Activated CD4-positive, alpha-beta memory T cell treated with anti-CD3 and anti-CD28 coated beads for 36 hours (primary cell): ENCODE measurements at regions of chr3 and their contacts with region 1.

Region 1: DNA sequence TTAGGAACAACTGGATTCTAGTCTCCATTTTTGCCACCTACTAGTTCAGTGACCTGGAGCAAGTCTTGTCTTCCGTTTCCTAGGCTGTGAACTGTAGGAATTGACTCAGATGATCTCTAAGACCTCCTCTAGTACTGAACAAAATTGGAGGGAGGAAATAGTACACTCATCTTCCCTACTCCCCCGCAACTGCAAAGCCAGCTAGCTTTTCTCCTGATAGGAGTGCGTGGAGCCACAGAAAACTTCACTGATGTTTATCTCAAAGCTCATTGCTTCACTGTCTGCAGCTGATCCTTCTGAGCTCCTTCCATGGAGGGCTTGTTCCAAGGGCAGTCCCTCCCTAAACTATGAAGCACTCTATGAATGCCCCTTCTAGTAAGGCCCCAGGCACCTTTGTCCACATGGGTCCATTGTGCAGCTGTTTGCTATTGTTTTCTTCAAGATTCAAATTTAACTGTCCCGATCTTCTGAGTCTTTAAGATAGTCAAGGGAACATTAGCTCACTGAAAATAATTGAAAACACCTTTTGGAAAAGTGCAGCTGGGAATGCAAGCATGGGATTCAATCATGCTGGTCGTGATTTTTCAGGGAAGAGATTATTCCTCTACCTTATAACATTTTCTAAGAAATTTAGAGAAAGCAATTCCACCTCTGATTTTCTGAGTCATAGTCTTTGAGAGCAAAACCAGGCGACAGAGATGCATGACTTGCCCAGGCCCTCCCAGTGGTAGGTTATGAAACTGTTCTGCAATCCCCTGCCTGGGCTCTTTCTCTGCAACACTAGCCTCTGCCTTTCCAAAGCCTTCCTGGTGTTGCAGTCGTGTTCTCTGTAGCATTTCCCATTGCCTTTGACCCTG is 24.3 kb downstream of the FILIP1L start:
- DNase-seq: peak; percentile 45
- H3K4me3 Mint-ChIP-seq: no peak overlapping the region
- H3K27ac Mint-ChIP-seq: no peak overlapping the region
- H3K4me1 Mint-ChIP-seq: peaks cover 20% of the 10 kb centered on the region
- H3K27me3 Mint-ChIP-seq: no peaks in the 10 kb centered on the region

Region 2: DNA sequence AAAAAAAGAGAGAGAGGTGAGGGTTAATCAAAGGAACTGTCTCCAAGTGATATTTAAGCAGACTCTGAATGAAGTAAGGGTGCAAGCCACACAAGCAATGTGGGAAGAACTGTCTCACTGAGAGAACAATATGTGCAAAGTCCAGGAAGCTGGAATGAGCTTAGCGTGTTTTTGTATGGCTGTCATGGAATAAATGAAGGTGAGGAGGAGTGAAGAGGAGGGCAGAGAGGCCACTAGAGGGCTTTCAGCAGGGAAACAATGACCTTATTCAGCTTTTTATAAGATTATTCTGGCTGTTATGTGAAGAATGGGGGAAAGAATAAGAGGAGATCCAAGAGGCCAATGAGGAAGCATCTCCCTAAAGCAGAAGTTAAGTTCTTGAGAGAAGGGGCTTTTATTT is 538.5 kb before region 1 on chr3:
- CTCF ChIA-PET with region 1: no interaction called
- POLR2A ChIA-PET with region 1: no interaction called
- intact Hi-C with region 1: no loop called
- DNase-seq: no peak
- H3K4me3 Mint-ChIP-seq: no peak overlapping the region
- H3K27ac Mint-ChIP-seq: no peak overlapping the region
- H3K4me1 Mint-ChIP-seq: no peaks in the 10 kb centered on the region
- H3K27me3 Mint-ChIP-seq: no peaks in the 10 kb centered on the region

Region 3: DNA sequence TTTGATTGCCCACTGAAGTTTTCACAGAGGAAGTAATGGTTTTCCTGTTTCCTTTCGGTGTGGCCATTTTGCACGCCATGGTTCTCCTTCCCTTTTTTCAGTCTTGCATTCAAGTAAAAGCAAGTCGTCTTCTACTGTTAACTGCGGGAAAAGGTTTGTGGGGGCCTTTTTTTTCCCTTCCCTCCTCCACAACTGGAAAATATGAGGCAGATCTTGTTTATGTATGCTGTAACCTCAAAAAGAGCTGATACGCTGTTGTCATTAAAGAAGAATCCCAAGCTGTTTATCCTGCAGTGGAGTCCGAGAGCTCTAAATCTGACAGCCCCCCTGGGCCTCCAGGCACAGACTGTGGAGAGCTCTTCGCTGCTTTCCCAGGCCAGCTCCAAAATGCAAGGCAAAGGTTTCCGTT is 16.1 kb before region 1 on chr3:
- CTCF ChIA-PET with region 1: interaction called, 24 read pairs
- POLR2A ChIA-PET with region 1: no interaction called
- intact Hi-C with region 1: loop called (anchors 2 kb)
- DNase-seq: no peak
- H3K4me3 Mint-ChIP-seq: peak overlapping the region; percentile 27
- H3K27ac Mint-ChIP-seq: peak overlapping the region; percentile 52
- H3K4me1 Mint-ChIP-seq: peaks cover 41% of the 10 kb centered on the region
- H3K27me3 Mint-ChIP-seq: no peaks in the 10 kb centered on the region

Region 4: GRCh38 chr3:100103558-100104441 is 13.8 kb after region 1 on chr3:
- CTCF ChIA-PET with region 1: interaction called, 4 read pairs
- POLR2A ChIA-PET with region 1: no interaction called
- intact Hi-C with region 1: loop called (anchors 2 kb)
- DNase-seq: peak; percentile 56
- H3K4me3 Mint-ChIP-seq: no peak overlapping the region
- H3K27ac Mint-ChIP-seq: peak overlapping the region; percentile 16
- H3K4me1 Mint-ChIP-seq: peaks cover 29% of the 10 kb centered on the region
- H3K27me3 Mint-ChIP-seq: no peaks in the 10 kb centered on the region

Region 5: GRCh38 chr3:100210772-100211135 is 120.7 kb after region 1 on chr3:
- CTCF ChIA-PET with region 1: no interaction called
- POLR2A ChIA-PET with region 1: no interaction called
- intact Hi-C with region 1: loop called (anchors 5 kb)
- DNase-seq: no peak
- H3K4me3 Mint-ChIP-seq: no peak overlapping the region
- H3K27ac Mint-ChIP-seq: no peak overlapping the region
- H3K4me1 Mint-ChIP-seq: peaks cover 15% of the 10 kb centered on the region
- H3K27me3 Mint-ChIP-seq: no peaks in the 10 kb centered on the region

Region 6: GRCh38 chr3:100254168-100254777 is 164.2 kb after region 1 on chr3:
- CTCF ChIA-PET with region 1: interaction called, 13 read pairs
- POLR2A ChIA-PET with region 1: no interaction called
- intact Hi-C with region 1: no loop called
- DNase-seq: peak; percentile 51
- H3K4me3 Mint-ChIP-seq: no peak overlapping the region
- H3K27ac Mint-ChIP-seq: no peak overlapping the region
- H3K4me1 Mint-ChIP-seq: peaks cover 8% of the 10 kb centered on the region
- H3K27me3 Mint-ChIP-seq: no peaks in the 10 kb centered on the region